ENCODE measurements at regions of chr3 and their contacts with region 1.

Region 1: DNA sequence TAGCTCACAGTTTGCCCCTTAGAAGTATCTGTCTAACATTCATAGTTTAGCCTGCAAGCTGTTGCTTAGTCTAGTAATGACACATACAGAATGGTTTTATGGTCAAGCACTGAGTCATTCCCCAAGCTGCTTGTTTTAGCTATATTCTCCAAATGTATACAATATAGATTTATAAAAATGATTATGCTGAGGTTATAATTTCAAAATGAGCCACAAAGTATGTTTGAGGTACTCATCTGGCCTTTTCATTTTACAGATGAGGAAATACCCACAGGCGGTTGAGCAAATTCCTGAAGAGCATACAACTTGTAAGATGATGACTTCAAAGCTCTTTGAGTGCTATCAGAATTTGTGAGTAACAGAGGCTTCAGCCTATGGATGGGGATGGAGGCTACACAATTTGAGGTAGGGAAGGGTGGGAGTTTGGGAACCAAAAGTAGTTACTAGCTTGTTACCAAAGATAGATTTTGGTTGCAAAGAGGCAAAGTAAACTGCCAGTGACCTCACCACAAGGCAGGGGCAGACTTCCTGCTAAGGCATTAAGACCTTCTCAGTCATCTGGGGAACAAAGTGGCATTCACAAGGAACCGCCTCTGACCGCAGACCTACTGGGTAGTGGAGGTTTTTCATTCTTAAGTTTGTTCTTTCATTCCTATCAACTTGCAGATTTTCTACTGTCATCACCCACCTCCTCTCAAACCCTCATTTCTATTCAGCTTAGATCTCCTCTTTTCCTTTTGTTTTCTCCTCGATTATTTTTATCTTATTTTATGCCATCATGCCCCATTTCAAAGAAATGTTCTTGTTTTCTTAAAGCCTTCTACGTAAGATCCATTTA is 257.2 kb upstream of the NECTIN3 start:
- DNase-seq: peak; percentile 81
- H3K4me3 ChIP-seq: no peak overlapping the region; the same call in 1 of the 2 replicates
- H3K27ac ChIP-seq: peak overlapping the region; percentile 87
- H3K27me3 ChIP-seq: no peaks in the 10 kb centered on the region
- CTCF ChIP-seq: no peak

Region 2: GRCh38 chr3:111071257-111072015 is 257.0 kb after region 1 on chr3 and contains the start of gene NECTIN3:
- CTCF ChIA-PET with region 1: no interaction called
- POLR2A ChIA-PET with region 1: interaction called, 11 read pairs
- DNase-seq: peak; percentile 97
- H3K4me3 ChIP-seq: peak within 1 kb of the TSS; percentile 93
- H3K27ac ChIP-seq: peak within 1 kb of the TSS; percentile 94
- H3K27me3 ChIP-seq: no peaks in the 10 kb centered on the region
- CTCF ChIP-seq: no peak
- polyA plus RNA-seq, gene NECTIN3: 71.9 and 98.3 TPM in 2 replicates